MCF 10A (cell line): ENCODE measurements at regions of chr14 and their contacts with region 1.

Region 1: DNA sequence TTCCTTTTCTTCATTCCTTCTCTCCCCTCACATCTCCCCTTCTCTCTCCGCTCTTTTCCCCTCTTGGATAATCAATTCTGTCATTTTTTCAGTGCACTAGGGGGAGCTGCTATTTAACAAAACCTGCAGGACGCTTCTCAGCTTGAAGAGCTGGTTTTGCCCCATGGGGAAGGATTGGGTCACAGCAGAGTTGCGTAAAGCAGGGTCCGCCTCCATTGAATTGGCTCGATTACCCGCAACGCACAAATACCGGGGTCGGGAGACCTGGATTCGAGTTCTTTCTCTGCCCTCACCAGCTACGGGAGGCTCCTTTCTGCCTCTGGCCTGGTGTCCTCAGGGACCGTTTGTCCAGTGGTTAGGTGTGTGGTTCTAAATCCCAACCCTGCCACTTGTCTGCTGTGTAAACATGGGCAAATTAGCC is 42.1 kb upstream of the CHGA start:
- DNase-seq: peak; percentile 80
- H3K4me3 Mint-ChIP-seq: no peak overlapping the region
- H3K27ac Mint-ChIP-seq: no peak overlapping the region
- H3K4me1 Mint-ChIP-seq: peaks cover 6% of the 10 kb centered on the region
- H3K27me3 Mint-ChIP-seq: peaks cover 66% of the 10 kb centered on the region
- CTCF ChIP-seq: peak; percentile 59

Region 2: DNA sequence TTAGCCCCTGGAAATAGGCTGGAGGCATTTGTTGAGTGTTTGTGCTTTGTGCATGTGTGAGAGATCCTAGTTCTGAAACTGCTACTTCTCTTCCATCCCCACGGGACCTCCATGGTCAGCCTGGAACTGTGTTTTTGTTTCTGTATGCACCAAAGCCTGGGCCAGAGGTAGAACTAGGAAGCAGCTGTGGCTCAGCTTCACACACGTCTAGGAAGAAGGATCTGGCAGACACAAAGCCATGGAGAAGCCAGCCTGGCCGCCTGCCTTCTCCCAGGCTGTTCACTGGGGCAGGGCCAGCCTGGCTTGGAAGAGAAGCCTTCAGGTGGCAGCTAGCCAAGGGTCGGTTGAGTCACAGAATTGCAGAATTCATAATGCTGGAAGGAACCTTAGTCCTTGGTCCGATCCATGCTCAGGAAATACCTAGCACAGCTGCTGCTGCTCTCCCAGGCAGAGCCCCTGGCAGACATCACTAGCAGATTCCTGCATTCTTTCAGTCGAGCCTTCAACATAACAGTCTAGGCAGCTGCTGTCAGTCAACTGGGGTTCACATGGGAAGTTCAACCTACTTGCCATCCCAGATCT is 340.3 kb before region 1 on chr14:
- CTCF ChIA-PET with region 1: no interaction called
- POLR2A ChIA-PET with region 1: no interaction called
- intact Hi-C with region 1: no loop called
- DNase-seq: peak; percentile 99
- H3K4me3 Mint-ChIP-seq: no peak overlapping the region
- H3K27ac Mint-ChIP-seq: peak overlapping the region; percentile 26
- H3K4me1 Mint-ChIP-seq: peaks cover 12% of the 10 kb centered on the region
- H3K27me3 Mint-ChIP-seq: no peaks in the 10 kb centered on the region
- CTCF ChIP-seq: no peak

Region 3: DNA sequence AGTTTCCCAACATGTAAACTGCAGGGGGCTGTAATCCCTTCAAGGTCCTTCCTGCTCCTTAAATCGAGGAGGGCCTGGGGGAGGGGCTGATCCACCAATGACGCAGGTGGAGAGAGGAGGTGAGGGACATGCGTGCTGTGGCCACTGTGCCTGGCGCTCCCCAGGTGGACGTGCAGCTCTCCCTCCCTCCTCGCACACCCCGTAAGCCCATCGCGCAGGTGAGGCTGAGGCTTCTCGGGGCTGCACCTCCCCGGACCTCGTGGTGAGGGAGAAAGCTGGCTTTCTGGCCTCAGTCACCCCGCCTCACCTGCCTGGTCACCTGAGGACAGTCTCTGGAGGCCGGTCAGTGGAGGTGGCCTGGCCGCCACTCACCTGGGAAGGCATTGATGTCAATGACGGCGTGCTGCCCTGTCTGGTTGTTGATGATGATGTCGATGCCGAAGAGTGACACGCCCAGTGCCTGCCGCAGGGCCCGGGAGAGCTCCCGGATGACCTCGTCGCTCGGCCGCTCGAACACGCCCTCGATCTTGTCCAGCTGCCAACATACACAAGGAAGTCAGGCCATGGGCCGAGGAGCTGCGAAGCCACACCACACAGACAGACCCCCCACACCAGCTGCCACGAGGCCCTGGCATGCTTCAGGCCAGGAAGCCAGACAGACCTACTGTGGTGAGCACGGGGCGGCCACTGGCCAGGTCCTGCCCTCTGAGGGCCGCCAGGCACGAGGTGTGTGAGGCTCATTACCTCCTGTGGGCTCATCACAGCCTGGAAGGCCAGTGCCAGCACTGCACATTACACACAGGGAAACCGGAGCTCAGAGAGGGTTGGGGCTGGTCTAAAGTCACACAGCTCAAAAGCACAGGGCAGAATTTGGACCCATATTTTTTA is 65.3 kb after region 1 on chr14:
- CTCF ChIA-PET with region 1: interaction called, 3 read pairs
- POLR2A ChIA-PET with region 1: interaction called, 7 read pairs
- intact Hi-C with region 1: loop called (anchors 2 kb)
- DNase-seq: peak; percentile 91
- H3K4me3 Mint-ChIP-seq: no peak overlapping the region
- H3K27ac Mint-ChIP-seq: peak overlapping the region; percentile 70
- H3K4me1 Mint-ChIP-seq: peaks cover 17% of the 10 kb centered on the region
- H3K27me3 Mint-ChIP-seq: no peaks in the 10 kb centered on the region
- CTCF ChIP-seq: no peak

Region 4: GRCh38 chr14:93137864-93138263 is 257.0 kb after region 1 on chr14:
- CTCF ChIA-PET with region 1: interaction called, 8 read pairs
- POLR2A ChIA-PET with region 1: no interaction called
- intact Hi-C with region 1: loop called (anchors 2 kb)
- DNase-seq: peak; percentile 58
- H3K4me3 Mint-ChIP-seq: no peak overlapping the region
- H3K27ac Mint-ChIP-seq: no peak overlapping the region
- H3K4me1 Mint-ChIP-seq: peaks cover 22% of the 10 kb centered on the region
- H3K27me3 Mint-ChIP-seq: no peaks in the 10 kb centered on the region
- CTCF ChIP-seq: no peak

Region 5: GRCh38 chr14:93173943-93174395 is 293.1 kb after region 1 on chr14:
- CTCF ChIA-PET with region 1: interaction called, 7 read pairs
- POLR2A ChIA-PET with region 1: no interaction called
- intact Hi-C with region 1: loop called (anchors 5 kb)
- DNase-seq: no peak
- H3K4me3 Mint-ChIP-seq: no peak overlapping the region
- H3K27ac Mint-ChIP-seq: no peak overlapping the region
- H3K4me1 Mint-ChIP-seq: no peaks in the 10 kb centered on the region
- H3K27me3 Mint-ChIP-seq: no peaks in the 10 kb centered on the region
- CTCF ChIP-seq: no peak